Upper lobe of right lung (tissue), 1 donor: ENCODE measurements at regions of chr3 and their contacts with region 1.

Region 1: DNA sequence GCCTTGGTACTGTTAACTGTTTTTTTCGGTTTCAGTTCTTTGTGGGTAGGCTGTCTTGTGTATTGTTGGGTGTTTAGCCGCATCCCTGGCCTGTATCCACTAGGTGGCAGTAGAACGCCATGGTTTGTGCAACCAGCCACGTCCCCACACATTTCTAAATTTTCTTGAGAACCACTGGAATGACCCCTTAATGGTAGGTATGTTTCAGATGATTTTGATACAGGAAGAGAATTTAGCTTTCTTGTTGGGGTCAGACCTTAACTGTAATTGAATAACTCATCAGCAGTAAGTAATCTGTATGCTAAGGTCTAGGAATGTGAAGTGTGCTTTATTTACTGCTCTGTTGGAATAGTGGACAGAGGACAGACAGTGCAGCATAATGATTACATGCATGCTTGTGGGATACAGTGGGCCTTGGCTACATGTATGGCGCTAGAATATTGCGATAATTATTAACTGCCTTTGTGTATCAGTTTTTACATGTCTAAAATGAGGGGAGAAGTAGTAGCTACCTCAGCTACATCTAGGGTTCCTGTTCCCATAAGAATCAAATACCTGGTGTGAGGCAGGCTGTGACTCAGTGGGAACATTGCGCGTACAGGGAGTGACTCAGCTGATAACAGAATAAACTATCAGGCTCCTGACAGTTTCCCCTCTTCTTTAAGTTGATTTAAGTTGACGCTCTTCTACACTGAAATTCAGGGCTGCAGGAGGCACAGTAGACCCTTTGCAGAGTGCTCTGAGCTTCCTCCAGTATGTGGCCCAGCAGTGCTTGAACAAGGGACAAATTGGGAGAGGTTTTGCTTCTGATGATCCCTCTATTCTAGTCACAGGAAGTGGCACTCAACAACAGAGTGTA is 25.0 kb upstream of the GPR171 start:
- DNase-seq: peak; percentile 72
- ATAC-seq: peak; percentile 95
- H3K4me3 ChIP-seq: no peak overlapping the region
- H3K27ac ChIP-seq: no peak overlapping the region
- H3K4me1 ChIP-seq: no peaks in the 10 kb centered on the region
- H3K27me3 ChIP-seq: no peaks in the 10 kb centered on the region
- CTCF ChIP-seq: peak; percentile 92

Region 2: DNA sequence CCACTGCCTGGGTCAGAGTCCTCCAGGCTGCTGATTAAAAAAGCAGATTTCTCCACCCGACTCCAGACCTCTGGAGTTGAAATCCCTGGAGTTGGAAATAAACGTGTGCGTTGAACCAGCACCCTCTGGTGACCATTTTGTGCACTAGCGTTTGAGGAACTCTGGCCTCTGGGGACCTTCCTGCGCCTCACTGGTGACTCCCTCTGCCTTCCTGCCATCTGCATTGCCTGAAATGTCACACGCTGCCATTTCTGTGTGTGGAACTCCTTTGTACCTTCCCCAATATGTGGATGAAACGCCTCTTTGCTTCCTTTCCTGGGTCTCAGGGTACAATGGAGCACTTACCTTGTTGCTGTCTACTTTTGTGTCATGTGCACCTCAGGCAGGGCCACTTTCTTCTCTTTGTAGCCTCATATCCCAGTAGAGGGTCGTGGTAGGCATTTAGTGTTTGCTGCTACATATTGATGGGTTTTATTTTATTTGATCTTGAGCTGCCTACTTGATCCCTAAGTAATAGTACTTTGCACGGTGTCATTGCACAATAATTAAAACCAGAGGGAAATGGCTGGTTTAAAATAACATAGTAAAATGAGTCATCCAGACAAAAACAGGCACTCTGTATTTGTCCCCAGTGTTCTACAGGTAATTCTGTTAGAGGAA is 81.8 kb before region 1 on chr3:
- intact Hi-C with region 1: no loop called
- DNase-seq: peak; percentile 71
- ATAC-seq: peak; percentile 98
- H3K4me3 ChIP-seq: no peak overlapping the region
- H3K27ac ChIP-seq: no peak overlapping the region
- H3K4me1 ChIP-seq: peaks cover 7% of the 10 kb centered on the region
- H3K27me3 ChIP-seq: peaks cover 5% of the 10 kb centered on the region
- CTCF ChIP-seq: peak; percentile 86

Region 3: DNA sequence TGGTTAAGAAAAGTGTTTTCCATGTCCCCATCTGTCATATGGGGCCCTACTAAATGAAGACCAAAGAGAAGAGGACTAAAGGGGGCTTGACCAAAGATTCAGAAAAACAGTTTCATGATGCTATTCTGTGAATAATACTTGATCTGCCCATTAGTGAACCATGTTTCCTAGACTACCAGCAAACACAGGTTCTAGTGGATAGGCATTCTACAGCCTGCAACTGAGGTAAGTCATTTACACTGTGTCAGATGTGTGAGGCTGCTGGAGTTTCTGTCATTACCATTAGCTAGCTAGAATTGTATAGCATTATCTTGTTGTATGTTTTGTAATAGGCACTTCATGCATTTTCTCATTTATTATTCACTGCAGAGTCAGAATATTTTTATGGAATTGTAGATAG is 31.6 kb before region 1 on chr3:
- intact Hi-C with region 1: no loop called
- DNase-seq: no peak
- ATAC-seq: no peak
- H3K4me3 ChIP-seq: no peak overlapping the region
- H3K27ac ChIP-seq: no peak overlapping the region
- H3K4me1 ChIP-seq: no peaks in the 10 kb centered on the region
- H3K27me3 ChIP-seq: no peaks in the 10 kb centered on the region
- CTCF ChIP-seq: no peak

Region 4: DNA sequence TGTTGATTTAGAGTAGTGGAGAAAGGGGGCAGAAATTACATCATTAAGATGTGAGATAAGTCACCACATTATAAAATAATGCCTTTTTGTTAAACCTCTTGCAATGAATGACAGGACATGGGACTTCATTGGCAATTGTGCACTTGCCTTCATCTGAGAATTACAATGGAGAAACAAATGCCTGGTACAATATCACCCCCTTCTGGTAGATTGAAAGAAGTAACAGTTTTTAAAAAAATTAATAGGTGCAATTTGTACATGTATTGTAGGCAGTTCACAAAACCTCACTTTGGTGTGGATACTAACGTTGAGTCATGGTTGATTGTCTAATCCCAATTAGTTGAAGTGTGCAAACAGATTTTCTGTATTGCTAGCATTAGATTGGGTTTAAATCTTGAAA is 54.9 kb after region 1 on chr3:
- intact Hi-C with region 1: loop called (anchors 10 kb)
- DNase-seq: no peak
- ATAC-seq: peak; percentile 75
- H3K4me3 ChIP-seq: no peak overlapping the region
- H3K27ac ChIP-seq: no peak overlapping the region
- H3K4me1 ChIP-seq: peaks cover 8% of the 10 kb centered on the region
- H3K27me3 ChIP-seq: no peaks in the 10 kb centered on the region
- CTCF ChIP-seq: peak; percentile 75